Left cardiac atrium (tissue), 4 donors: ENCODE measurements at regions of chr9 and their contacts with region 1.

Region 1: GRCh38 chr9:126781186-126782052 is 23.4 kb upstream of the ZBTB43 start:
- DNase-seq: peak; percentile 82
- ATAC-seq: peak; percentile 90 to 94

Region 2: GRCh38 chr9:126611592-126612325 is 169.7 kb before region 1 on chr9:
- intact Hi-C with region 1: loop called in 1 of 2 experiments (anchors 5 kb)
- DNase-seq: peak; percentile 83
- ATAC-seq: peak; percentile 81 to 82

Region 3: DNA sequence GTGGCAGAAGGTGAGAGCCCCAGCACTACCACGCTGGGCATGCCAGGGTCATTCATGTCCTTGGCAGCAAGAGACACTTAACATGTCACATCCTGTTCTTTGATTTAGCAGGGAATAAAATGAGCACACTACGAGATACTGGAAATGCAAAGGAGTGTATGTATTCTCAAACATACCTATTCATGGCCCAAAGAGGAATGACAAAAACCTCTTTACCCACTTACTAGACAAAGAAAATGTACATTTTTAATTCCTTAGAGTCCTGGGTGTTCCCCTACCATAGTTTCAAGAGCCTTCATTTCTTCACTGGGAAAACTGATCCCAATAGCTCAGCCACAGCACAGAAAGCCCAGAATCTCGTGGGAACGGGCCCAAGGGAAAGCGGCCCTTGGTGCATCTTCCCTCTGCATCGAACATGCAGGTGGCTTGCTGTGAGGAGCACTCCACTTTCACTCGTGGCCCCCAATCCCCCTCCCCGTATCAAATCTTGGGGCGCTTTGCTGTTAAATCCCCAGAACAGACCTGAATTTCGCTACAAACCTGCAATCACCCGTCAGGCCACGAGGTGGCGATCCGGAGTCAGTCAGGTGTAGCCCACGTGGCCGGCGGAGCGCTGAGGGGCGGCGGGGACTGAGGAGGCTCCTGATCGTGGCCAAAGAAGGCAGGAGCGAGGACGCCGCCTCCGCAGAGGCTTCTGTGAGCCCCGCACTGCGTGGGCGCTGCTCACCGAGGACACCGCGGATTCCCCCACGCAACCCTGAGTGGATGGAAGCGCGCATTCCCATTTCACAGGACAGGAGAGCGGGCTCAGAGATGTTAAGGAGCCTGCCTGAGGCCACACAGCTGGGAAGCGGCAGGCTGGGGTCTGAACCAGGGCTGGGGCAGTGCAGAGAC is 76.3 kb before region 1 on chr9:
- intact Hi-C with region 1: loop called (anchors 1 to 2 kb)
- DNase-seq: peak; percentile 85
- ATAC-seq: peak; percentile 83 to 86

Region 4: GRCh38 chr9:126719618-126720031 is 61.8 kb before region 1 on chr9:
- intact Hi-C with region 1: no loop called
- DNase-seq: peak; percentile 77
- ATAC-seq: peak; percentile 10 to 43